Mammary epithelial cell (primary cell): ENCODE measurements at regions of chr18 and their contacts with region 1.

Region 1: DNA sequence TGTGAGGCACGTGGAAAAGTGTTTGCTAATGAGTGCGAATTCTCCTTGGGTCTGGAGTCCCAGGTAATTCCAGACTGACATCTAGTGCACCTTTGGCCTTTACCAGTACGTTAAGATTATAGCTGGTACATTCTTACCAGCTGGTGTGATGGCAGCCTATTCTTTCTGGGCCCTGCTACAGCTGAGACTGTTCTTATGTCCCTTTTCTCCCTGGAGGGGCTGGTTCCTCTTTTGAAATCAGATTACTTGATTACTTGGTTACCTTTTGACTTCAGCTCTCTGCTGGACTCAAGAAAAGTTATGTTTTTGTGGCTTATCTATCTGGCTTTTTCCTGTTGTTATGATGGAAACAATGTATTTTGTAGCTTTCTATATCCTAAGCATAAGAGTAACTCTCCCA is 14.5 kb downstream of the CABYR start:
- DNase-seq: no peak
- H3K4me3 ChIP-seq: no peak overlapping the region
- H3K27ac ChIP-seq: no peak overlapping the region
- H3K4me1 ChIP-seq: no peaks in the 10 kb centered on the region
- H3K27me3 ChIP-seq: no peaks in the 10 kb centered on the region
- CTCF ChIP-seq: no peak

Region 2: DNA sequence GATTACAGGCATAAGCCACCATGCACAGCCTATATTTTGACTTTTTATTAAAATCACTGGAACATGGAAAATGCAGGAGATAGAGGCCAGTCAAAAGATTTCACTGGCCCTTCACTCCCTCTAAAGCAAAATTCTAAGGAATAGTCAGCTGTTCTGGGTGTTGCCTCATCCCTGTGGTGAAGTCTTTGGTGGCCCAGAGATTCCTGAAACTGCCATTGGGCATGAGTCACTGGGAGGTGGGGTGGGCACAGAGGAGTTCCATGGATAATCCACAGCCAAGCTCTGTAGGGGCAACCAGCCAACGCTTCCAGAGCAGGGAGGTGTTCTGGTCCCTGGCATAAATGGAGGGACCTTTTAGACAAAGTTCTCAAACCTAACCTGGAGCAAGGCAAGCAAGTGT is 228.6 kb before region 1 on chr18:
- CTCF ChIA-PET with region 1: no interaction called
- dilution Hi-C with region 1: no loop called
- in situ Hi-C with region 1: no loop called
- intact Hi-C with region 1: no loop called
- DNase-seq: no peak
- H3K4me3 ChIP-seq: no peak overlapping the region
- H3K27ac ChIP-seq: no peak overlapping the region
- H3K4me1 ChIP-seq: no peaks in the 10 kb centered on the region
- H3K27me3 ChIP-seq: no peaks in the 10 kb centered on the region
- CTCF ChIP-seq: no peak

Region 3: DNA sequence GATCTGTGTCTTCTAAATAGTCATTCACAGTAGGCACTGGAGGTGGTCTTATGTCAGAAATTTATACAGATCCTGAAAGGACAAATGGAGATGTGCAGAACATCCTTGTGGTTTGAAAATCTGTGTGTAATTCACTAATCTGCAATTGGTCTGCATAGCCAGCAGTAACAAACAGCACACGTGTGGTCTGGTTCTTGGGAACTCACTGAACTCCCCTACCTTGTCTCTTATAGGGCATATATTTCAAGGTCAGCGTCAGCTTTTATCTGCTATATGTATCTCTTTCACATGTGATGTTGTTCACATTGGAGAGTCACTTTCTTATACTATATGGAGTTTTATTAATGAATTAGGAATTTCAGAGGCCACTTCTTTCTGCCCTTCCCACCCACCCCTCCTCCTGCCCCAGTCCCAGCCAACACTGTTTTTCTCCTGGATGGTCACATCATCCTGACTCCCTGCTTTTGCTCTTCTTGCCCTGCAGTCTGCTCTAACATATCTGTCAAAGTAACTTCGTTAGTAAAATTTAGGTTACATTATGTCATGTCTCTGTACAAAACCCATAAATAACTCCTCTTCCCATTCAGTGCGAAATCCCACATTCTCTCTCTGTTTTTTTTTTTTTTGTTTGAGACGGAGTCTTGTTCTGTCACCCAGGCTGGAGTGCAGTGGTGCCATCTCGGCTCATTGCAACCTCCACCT is 49.9 kb before region 1 on chr18:
- CTCF ChIA-PET with region 1: no interaction called
- dilution Hi-C with region 1: no loop called
- in situ Hi-C with region 1: no loop called
- intact Hi-C with region 1: no loop called
- DNase-seq: no peak
- H3K4me3 ChIP-seq: no peak overlapping the region
- H3K27ac ChIP-seq: no peak overlapping the region
- H3K4me1 ChIP-seq: peaks cover 11% of the 10 kb centered on the region
- H3K27me3 ChIP-seq: no peaks in the 10 kb centered on the region
- CTCF ChIP-seq: no peak

Region 4: DNA sequence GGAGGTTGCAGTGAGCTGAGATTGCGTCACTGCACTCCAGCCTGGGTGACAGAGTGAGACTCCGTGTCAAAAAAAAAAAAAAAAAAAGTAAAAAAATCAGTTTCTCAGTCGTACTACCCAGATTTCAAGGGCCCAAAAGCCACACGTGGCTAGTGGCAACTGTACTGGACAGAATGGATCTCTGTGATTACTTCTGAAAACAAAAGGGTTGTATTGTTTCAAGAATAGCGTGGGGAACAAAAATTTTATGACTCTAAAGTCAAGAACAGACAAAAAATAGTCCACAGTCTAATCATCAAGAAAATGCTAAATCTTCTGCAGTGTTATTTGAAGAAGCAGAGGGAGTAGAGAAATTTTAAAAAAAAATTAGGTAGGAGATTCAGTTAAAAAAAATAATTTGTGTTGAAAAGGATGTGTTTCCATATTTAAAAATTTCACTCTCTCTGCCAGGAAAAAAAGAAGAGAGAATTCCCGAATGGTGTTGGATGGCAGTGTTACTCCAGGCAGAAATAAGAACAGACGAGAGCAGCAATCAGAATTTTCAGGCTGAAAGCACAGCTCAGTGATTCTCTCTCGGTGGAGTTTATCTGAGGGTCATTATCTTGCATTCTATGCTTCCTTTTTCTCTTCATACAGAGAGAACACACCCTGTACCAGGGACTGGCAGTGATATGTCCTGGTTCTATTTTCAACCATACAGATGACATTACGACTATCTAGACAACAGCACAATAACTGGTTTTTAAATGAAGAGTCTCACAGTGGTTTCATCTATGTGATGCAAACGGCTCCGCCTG is 47.3 kb after region 1 on chr18:
- CTCF ChIA-PET with region 1: no interaction called
- dilution Hi-C with region 1: loop called (anchors 5 kb)
- in situ Hi-C with region 1: no loop called
- intact Hi-C with region 1: no loop called
- DNase-seq: no peak
- H3K4me3 ChIP-seq: no peak overlapping the region
- H3K27ac ChIP-seq: no peak overlapping the region
- H3K4me1 ChIP-seq: no peaks in the 10 kb centered on the region
- H3K27me3 ChIP-seq: no peaks in the 10 kb centered on the region
- CTCF ChIP-seq: no peak

Region 5: DNA sequence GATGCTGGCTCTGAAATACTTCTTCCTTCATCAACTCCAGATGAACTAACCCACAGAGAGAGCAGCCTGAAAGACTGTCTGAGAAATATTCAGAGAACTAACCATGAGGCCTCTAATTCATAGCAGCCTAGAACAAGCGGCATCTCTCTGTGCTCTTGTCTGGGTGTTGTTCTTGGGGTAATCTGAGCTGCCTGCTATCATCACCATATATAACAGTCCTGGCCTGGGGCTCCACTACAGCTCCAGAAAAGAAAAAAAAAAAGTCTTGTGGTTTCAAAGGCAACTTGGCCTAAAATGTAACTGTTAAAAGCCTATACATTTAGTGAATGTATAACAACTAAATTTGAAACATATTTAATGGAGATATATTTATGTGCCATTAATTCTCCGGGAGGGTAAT is 601.2 kb after region 1 on chr18:
- CTCF ChIA-PET with region 1: no interaction called
- dilution Hi-C with region 1: no loop called
- in situ Hi-C with region 1: no loop called
- intact Hi-C with region 1: no loop called
- DNase-seq: no peak
- H3K4me3 ChIP-seq: no peak overlapping the region
- H3K27ac ChIP-seq: no peak overlapping the region
- H3K4me1 ChIP-seq: no peaks in the 10 kb centered on the region
- H3K27me3 ChIP-seq: no peaks in the 10 kb centered on the region
- CTCF ChIP-seq: no peak